Calu3 (cell line): ENCODE measurements at regions of chr7 and their contacts with region 1.

Region 1: DNA sequence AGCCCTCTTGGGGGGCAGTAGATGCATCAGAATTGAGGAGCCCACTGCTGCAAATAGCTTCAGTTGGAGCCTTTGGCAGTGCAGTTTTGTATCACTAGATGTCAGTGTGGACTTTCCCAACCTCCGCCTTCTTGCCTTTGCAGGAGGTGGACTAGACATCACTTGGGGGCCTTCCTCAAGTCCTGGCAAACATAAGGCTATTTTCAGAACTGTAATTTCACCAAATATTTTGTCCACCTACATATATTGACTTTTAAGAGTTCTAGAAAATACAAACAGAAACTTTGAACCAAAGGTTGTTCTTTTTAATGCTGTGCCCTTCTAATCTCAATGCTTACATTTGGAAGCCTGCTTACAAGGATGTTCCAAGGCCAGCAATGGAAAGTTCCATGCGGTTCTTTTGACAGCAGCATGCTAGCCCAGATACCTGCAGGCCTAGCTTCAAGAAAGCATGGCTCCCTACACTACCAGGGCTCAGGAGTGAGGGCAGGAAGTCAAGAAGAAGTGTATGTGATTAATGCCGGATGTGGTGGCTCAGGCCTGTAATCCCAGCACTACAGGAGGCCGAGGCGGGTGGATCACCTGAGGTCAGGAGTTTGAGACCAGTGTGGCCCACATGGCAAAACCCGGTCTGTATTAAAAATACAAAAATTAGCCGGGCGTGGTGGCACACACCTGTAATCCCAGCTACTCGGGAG is 8.0 kb upstream of the ZNRF2 start:
- DNase-seq: peak; percentile 69
- H3K4me3 Mint-ChIP-seq: no peak overlapping the region
- H3K27ac Mint-ChIP-seq: no peak overlapping the region
- H3K4me1 Mint-ChIP-seq: peaks cover 15% of the 10 kb centered on the region
- H3K27me3 Mint-ChIP-seq: no peaks in the 10 kb centered on the region
- CTCF ChIP-seq: peak; percentile 83

Region 2: GRCh38 chr7:30366606-30367005 is 90.3 kb after region 1 on chr7:
- CTCF ChIA-PET with region 1: no interaction called
- intact Hi-C with region 1: no loop called
- DNase-seq: no peak
- H3K4me3 Mint-ChIP-seq: no peak overlapping the region
- H3K27ac Mint-ChIP-seq: no peak overlapping the region
- H3K4me1 Mint-ChIP-seq: no peaks in the 10 kb centered on the region
- H3K27me3 Mint-ChIP-seq: no peaks in the 10 kb centered on the region
- CTCF ChIP-seq: no peak

Region 3: GRCh38 chr7:30412810-30413504 is 136.6 kb after region 1 on chr7:
- CTCF ChIA-PET with region 1: interaction called, 17 read pairs
- intact Hi-C with region 1: loop called (anchors 2 kb)
- DNase-seq: peak; percentile 66
- H3K4me3 Mint-ChIP-seq: no peak overlapping the region
- H3K27ac Mint-ChIP-seq: no peak overlapping the region
- H3K4me1 Mint-ChIP-seq: no peaks in the 10 kb centered on the region
- H3K27me3 Mint-ChIP-seq: no peaks in the 10 kb centered on the region
- CTCF ChIP-seq: peak; percentile 65